Activated CD4-positive, alpha-beta T cell treated with anti-CD3 and anti-CD28 coated beads for 36 hours (primary cell): ENCODE measurements at regions of chr5 and their contacts with region 1.

Region 1: DNA sequence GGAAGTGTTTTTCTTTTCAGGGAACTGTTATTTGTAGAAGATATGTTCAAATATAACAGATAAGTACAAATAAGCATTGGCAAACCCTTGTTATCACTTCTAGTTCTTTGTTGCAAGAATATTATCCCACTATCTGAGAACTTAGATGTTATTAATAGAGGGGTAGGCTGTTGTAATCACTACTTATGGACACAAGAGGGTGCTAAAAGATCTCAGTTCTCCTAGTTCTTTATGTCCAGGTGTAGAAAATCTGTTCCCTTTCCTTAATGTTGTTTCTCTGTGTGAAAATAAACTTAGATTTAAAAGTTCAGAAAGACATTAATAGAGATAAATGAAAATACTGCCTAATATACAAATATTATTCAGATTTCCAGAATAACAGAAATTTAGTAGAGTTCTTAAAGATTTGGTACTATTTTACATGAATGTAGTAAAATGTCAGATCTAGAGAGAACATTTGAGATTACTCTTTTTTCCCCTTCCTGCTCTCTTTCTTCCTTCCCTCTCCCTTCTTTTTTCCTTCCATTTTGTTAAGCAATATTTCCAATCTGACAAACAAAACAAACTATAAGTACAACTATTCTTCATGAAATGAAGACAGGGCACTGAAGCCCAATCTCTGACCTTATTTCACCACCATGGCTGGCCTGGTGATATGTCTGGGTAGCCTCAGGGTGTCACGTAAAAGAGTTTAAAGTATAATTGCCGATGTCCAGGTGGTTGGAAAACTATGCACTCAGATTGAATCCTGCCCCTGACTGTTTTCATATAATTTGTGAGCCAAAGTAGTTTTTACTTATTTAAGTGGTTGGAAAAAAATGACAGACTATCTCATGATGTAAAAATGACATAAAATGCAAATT is 43.6 kb upstream of the C5orf46 start:
- DNase-seq: no peak
- ATAC-seq: no peak
- H3K4me3 Mint-ChIP-seq: no peak overlapping the region
- H3K27ac Mint-ChIP-seq: no peak overlapping the region
- H3K4me1 Mint-ChIP-seq: no peaks in the 10 kb centered on the region
- H3K27me3 Mint-ChIP-seq: peaks cover 6% of the 10 kb centered on the region

Region 2: DNA sequence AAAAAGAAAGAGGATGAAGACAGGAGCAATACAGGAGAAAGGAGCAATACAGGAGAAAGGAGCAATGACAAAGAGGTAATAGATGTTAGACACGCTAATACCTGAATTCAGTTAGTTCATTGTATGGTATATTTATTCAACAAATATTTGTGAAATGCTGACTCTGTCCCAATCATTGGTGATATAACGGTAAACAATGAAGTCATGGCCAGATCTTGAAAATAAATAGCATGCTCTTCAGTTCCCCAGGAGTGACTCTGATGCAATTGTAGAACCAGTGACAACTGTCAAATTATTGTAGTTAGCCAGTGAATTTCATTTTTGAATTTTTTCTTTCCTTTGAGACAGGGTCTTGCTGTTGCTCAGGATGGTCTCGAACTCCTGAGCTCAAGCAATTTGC is 170.4 kb after region 1 on chr5:
- CTCF ChIA-PET with region 1: no interaction called
- POLR2A ChIA-PET with region 1: no interaction called
- intact Hi-C with region 1: loop called in 1 of 2 experiments (anchors 2 kb)
- DNase-seq: no peak
- ATAC-seq: no peak
- H3K4me3 Mint-ChIP-seq: no peak overlapping the region
- H3K27ac Mint-ChIP-seq: no peak overlapping the region
- H3K4me1 Mint-ChIP-seq: no peaks in the 10 kb centered on the region
- H3K27me3 Mint-ChIP-seq: peaks cover 2% of the 10 kb centered on the region